H1 (cell line): ENCODE measurements at regions of chr16 and their contacts with region 1.

Region 1: GRCh38 chr16:66386629-66387622 is 20.4 kb downstream of the CDH5 start:
- DNase-seq: no peak
- H3K4me3 ChIP-seq: no peak overlapping the region
- H3K27ac ChIP-seq: no peak overlapping the region
- H3K4me1 ChIP-seq: peaks cover 0 to 3% (median 0%) of the 10 kb centered on the region in 4 experiments; a peak in 3 of 7 replicates
- H3K27me3 ChIP-seq: no peaks in the 10 kb centered on the region
- CTCF ChIP-seq: no peak
- EP300 ChIP-seq: no peak
- POLR2A ChIP-seq: no peak
- RAD21 ChIP-seq: no peak

Region 2: GRCh38 chr16:66357153-66357928 is 29.6 kb before region 1 on chr16:
- CTCF ChIA-PET with region 1: interaction called, 11 read pairs
- POLR2A ChIA-PET with region 1: no interaction called
- DNase-seq: peak in 1 of 2 experiments; percentile 27
- H3K4me3 ChIP-seq: no peak overlapping the region
- H3K27ac ChIP-seq: no peak overlapping the region
- H3K4me1 ChIP-seq: peaks cover 0 to 8% (median 1%) of the 10 kb centered on the region in 4 experiments; a peak in 3 of 7 replicates
- H3K27me3 ChIP-seq: peaks cover 0 to 3% (median 0%) of the 10 kb centered on the region in 4 experiments; a peak in 1 of 7 replicates
- CTCF ChIP-seq: peak; percentile 42 to 76 (median 72)
- EP300 ChIP-seq: no peak
- POLR2A ChIP-seq: no peak
- RAD21 ChIP-seq: peak; percentile 44 to 56